ENCODE measurements at regions of chr10 and their contacts with region 1.

Region 1: GRCh38 chr10:102408728-102409603 is 9.6 kb downstream of the PSD start:
- DNase-seq: peak; percentile 91
- ATAC-seq: peak; percentile 73
- H3K4me3 Mint-ChIP-seq: peak overlapping the region; percentile 80
- H3K27ac Mint-ChIP-seq: peak overlapping the region; percentile 62
- H3K4me1 Mint-ChIP-seq: peaks cover 42% of the 10 kb centered on the region
- H3K27me3 Mint-ChIP-seq: peaks cover 7% of the 10 kb centered on the region
- CTCF ChIP-seq: no peak

Region 2: GRCh38 chr10:102064868-102065560 is 344.0 kb before region 1 on chr10 and contains the start of gene HPS6:
- CTCF ChIA-PET with region 1: no interaction called
- POLR2A ChIA-PET with region 1: no interaction called
- intact Hi-C with region 1: loop called (anchors 5 kb)
- DNase-seq: peak; percentile 91
- ATAC-seq: peak; percentile 99
- H3K4me3 Mint-ChIP-seq: peak within 1 kb of the TSS; percentile 84
- H3K27ac Mint-ChIP-seq: peak within 1 kb of the TSS; percentile 90
- H3K4me1 Mint-ChIP-seq: peaks cover 33% of the 10 kb centered on the region
- H3K27me3 Mint-ChIP-seq: no peaks in the 10 kb centered on the region
- CTCF ChIP-seq: no peak
- total RNA-seq, gene HPS6: 18.0 to 18.1 TPM